ENCODE measurements at regions of chr4 and their contacts with region 1.

Region 1: GRCh38 chr4:153750197-153750817 is 9.5 kb downstream of the RNF175 start:
- DNase-seq: peak; percentile 37 to 78 (median 64)
- ATAC-seq: peak; percentile 82
- H3K4me3 ChIP-seq: no peak overlapping the region
- H3K4me3 Mint-ChIP-seq: no peak overlapping the region
- H3K27ac ChIP-seq: no peak overlapping the region
- H3K27ac Mint-ChIP-seq: peak overlapping the region in 2 of 9 donors; percentile 26 to 45
- H3K4me1 ChIP-seq: peaks cover 0 to 12% of the 10 kb centered on the region in 2 donors
- H3K4me1 Mint-ChIP-seq: peaks cover 4 to 31% (median 17%) of the 10 kb centered on the region in 7 donors
- H3K27me3 ChIP-seq: no peaks in the 10 kb centered on the region
- H3K27me3 Mint-ChIP-seq: peaks cover 0 to 32% (median 0%) of the 10 kb centered on the region in 5 donors

Region 2: GRCh38 chr4:153153339-153153871 is 596.9 kb before region 1 on chr4:
- CTCF ChIA-PET with region 1: no interaction called
- POLR2A ChIA-PET with region 1: no interaction called
- intact Hi-C with region 1: loop called in 1 of 2 experiments (anchors 5 kb)
- DNase-seq: peak; percentile 53 to 84 (median 78)
- ATAC-seq: peak; percentile 95
- H3K4me3 ChIP-seq: peak overlapping the region; percentile 81
- H3K4me3 Mint-ChIP-seq: peak overlapping the region; percentile 91 to 96 (median 92)
- H3K27ac ChIP-seq: peak overlapping the region; percentile 69
- H3K27ac Mint-ChIP-seq: peak overlapping the region; percentile 78 to 90 (median 85)
- H3K4me1 ChIP-seq: peaks cover 3 to 12% of the 10 kb centered on the region in 2 donors
- H3K4me1 Mint-ChIP-seq: peaks cover 23 to 42% (median 38%) of the 10 kb centered on the region in 7 donors
- H3K27me3 ChIP-seq: no peaks in the 10 kb centered on the region
- H3K27me3 Mint-ChIP-seq: peaks cover 0 to 43% (median 0%) of the 10 kb centered on the region in 5 donors

Region 3: GRCh38 chr4:153585026-153585425 is 165.3 kb before region 1 on chr4:
- CTCF ChIA-PET with region 1: no interaction called
- POLR2A ChIA-PET with region 1: interaction called, 3 read pairs
- intact Hi-C with region 1: loop called in 1 of 2 experiments (anchors 5 kb)
- DNase-seq: no peak
- ATAC-seq: no peak
- H3K4me3 ChIP-seq: no peak overlapping the region
- H3K4me3 Mint-ChIP-seq: no peak overlapping the region
- H3K27ac ChIP-seq: no peak overlapping the region
- H3K27ac Mint-ChIP-seq: peak overlapping the region in 8 of 9 donors; percentile 61 to 87 (median 74)
- H3K4me1 ChIP-seq: no peaks in the 10 kb centered on the region
- H3K4me1 Mint-ChIP-seq: peaks cover 8 to 65% (median 33%) of the 10 kb centered on the region in 7 donors
- H3K27me3 ChIP-seq: no peaks in the 10 kb centered on the region
- H3K27me3 Mint-ChIP-seq: no peaks in the 10 kb centered on the region

Region 4: DNA sequence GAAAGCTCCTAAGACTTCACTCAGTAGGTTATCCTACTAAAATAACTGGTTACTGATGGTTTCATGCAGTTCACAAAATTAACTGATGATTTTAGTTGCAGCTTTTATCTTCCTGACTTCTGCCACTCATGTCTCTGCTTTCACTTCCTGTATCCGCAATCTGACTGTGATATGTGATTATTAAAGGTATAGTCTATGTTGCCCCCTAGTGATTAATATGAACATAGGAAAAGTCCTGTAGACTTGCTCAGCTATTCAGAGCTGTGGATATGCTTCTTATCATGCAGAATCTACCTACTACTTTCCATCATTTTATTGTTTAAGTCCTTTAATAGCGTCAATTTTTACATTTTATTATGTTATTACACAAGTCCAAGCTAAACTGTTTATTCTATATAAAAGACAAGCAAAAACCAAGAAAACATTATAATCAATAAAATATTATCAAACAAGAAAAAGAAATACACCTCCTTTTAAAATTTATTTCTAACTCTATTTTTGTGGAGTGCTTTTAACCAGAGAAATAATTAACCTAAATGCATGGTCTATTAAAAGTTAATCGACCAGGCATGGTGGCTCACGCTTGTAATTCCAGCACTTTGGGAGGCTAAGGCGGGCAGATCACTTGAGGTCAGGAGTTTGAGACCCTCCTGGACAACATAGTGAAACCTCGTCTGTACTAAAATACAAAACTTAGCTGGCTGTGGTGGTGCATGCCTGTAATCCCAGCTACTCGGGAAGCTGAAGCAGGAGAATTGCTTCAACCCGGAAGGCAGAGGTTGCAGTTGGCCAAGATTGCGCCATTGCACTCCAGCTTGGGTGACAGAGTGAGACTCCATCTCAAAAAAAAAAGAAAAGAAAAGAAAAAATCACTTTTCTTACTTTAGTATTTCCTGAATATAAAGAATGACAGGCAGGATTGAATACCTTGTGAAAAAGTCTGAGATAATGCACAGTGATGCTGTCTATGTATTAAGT is 106.6 kb before region 1 on chr4:
- CTCF ChIA-PET with region 1: interaction called, 5 read pairs
- POLR2A ChIA-PET with region 1: interaction called, 4 read pairs
- intact Hi-C with region 1: loop called in 1 of 2 experiments (anchors 2 kb)
- DNase-seq: peak in 7 of 9 donors; percentile 25 to 73 (median 56)
- ATAC-seq: peak; percentile 91
- H3K4me3 ChIP-seq: no peak overlapping the region
- H3K4me3 Mint-ChIP-seq: peak overlapping the region in 6 of 10 donors; percentile 0 to 46 (median 22)
- H3K27ac ChIP-seq: no peak overlapping the region
- H3K27ac Mint-ChIP-seq: peak overlapping the region in 7 of 9 donors; percentile 0 to 69 (median 8)
- H3K4me1 ChIP-seq: no peaks in the 10 kb centered on the region
- H3K4me1 Mint-ChIP-seq: peaks cover 4 to 22% (median 18%) of the 10 kb centered on the region in 7 donors
- H3K27me3 ChIP-seq: no peaks in the 10 kb centered on the region
- H3K27me3 Mint-ChIP-seq: no peaks in the 10 kb centered on the region

Measured in naive thymus-derived CD4-positive, alpha-beta T cell (primary cell).